ENCODE measurements at regions of chr10 and their contacts with region 1.

Region 1: GRCh38 chr10:29089091-29089490 is 199.8 kb upstream of the LYZL1 start:
- DNase-seq: no peak
- ATAC-seq: no peak
- H3K4me3 ChIP-seq: no peak overlapping the region
- H3K27ac ChIP-seq: no peak overlapping the region
- H3K4me1 ChIP-seq: no peaks in the 10 kb centered on the region
- H3K27me3 ChIP-seq: no peaks in the 10 kb centered on the region
- CTCF ChIP-seq: no peak

Region 2: GRCh38 chr10:29109707-29110571 is 20.8 kb after region 1 on chr10:
- intact Hi-C with region 1: loop called in 1 of 10 experiments (anchors 1 kb)
- DNase-seq: no peak
- ATAC-seq: no peak
- H3K4me3 ChIP-seq: no peak overlapping the region
- H3K27ac ChIP-seq: no peak overlapping the region
- H3K4me1 ChIP-seq: no peaks in the 10 kb centered on the region
- H3K27me3 ChIP-seq: peaks cover 0 to 15% (median 0%) of the 10 kb centered on the region in 7 donors
- CTCF ChIP-seq: no peak

Region 3: GRCh38 chr10:29392376-29393021 is 303.4 kb after region 1 on chr10:
- intact Hi-C with region 1: no loop called
- DNase-seq: peak in 1 of 2 donors; percentile 15
- ATAC-seq: peak in 2 of 8 donors; percentile 42 to 67
- H3K4me3 ChIP-seq: no peak overlapping the region
- H3K27ac ChIP-seq: no peak overlapping the region
- H3K4me1 ChIP-seq: no peaks in the 10 kb centered on the region
- H3K27me3 ChIP-seq: no peaks in the 10 kb centered on the region
- CTCF ChIP-seq: peak; percentile 55 to 83 (median 74)

Measured in heart right ventricle (tissue), 16 donors.